Sciatic nerve (tissue), 2 donors: ENCODE measurements at regions of chr14 and their contacts with region 1.

Region 1: DNA sequence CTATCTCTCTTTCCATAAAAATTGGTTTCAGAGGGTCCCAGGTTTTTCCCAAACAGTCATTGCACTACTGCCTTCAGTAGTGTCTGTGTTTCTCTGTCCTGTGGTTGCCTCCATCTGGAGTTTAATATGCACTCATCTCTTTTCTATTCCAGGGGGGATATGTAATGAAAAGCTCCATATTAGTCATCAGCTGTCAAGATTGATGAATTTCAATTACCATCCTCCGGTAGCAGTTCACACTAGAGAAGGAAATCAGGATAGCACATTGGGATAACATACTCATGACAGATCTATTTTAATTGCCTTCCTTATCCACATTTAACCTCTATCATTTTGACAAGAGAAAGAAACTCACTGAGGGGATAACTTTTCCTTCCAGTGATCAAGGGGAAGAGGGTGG is 589.0 kb upstream of the SEL1L start:
- DNase-seq: no peak
- ATAC-seq: no peak

Region 2: GRCh38 chr14:82094829-82095345 is 27.8 kb before region 1 on chr14:
- intact Hi-C with region 1: no loop called
- DNase-seq: no peak
- ATAC-seq: no peak

Region 3: DNA sequence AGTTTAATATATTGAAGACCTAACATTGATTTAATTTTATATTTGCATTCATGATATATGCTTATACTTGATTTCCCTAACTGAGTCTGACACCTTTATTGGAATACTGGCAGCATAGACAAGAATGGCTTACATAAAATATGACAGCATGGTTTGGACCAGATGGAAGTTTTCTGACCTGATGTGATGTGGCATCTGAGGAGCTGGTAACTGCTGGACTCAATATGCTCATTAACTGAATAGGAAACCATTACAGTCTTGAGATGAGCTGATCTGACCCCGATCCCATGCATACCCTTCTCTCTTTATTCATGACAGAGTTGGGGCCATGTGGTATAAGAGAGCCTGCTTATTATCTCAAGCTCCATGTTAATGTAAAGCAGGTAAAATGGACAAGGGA is 15.8 kb after region 1 on chr14:
- intact Hi-C with region 1: loop called (anchors 1 kb)
- DNase-seq: no peak
- ATAC-seq: no peak